ENCODE measurements at regions of chr3 and their contacts with region 1.

Region 1: DNA sequence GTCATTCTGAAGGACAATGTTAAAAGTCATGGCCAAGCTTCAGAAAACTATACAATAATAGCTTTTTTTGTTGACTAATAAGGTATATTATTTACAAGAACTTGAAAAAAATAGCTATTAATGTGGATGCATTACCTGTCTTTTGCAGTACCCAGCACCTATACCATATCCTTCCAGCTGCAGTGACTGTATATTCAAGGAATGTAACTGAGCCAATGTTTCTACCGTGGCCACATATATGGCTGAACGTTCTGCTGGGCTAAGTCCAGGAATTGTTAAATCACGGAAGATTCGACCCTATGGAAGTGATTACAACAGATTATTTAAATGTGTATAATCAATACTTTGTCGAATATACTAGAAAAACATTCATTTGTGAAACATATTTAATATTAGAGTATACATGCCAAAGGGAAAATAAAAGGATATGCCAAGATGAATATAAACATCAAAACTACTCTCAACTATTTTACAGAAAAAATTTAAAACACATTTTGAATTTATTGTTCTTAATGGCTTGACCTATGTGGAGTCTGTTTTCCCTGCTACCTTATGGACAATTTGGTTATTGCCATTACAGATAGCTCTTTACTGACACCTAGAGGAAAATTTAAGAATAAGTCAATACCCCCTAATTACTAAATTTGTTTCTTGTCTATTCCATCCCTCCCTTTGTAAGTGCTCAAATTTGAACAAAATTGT is 17.6 kb downstream of the ACAD11 start:
- DNase-seq: no peak
- ATAC-seq: peak in 3 of 4 donors; percentile 63 to 77 (median 67)
- H3K4me3 ChIP-seq: no peak overlapping the region
- H3K27ac ChIP-seq: no peak overlapping the region
- H3K4me1 ChIP-seq: no peaks in the 10 kb centered on the region
- H3K27me3 ChIP-seq: no peaks in the 10 kb centered on the region
- CTCF ChIP-seq: peak; percentile 79

Region 2: DNA sequence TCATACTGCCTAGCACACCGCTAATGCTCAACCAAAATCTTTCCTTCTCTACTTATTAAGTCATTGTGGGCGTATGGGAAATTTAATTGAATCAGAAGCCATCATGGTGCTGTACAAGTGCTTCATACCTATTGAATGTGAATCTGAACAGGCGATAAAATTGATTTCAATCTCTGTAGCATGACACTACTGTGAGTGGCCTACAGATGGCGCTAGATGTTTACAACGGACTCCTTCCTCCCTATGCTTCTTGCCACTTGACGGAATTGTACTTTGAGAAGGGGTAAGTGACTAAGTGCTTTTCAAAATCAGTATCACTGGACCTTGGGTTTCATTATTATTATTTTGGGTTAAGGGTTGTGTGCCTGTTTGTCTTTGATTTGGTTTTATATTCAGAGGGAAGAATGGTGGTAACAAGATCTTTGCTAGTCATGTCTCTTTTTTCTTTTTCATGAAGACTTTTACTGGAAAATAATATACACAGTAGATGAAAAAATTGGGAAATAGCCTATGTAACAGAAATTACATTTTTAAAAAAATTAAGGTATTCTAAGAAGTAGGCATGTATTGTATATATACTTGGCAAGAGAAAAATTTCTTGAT is 289.3 kb before region 1 on chr3:
- intact Hi-C with region 1: loop called (anchors 5 to 10 kb)
- DNase-seq: peak in 1 of 2 donors; percentile 21
- ATAC-seq: peak; percentile 81 to 94 (median 85)
- H3K4me3 ChIP-seq: no peak overlapping the region
- H3K27ac ChIP-seq: no peak overlapping the region
- H3K4me1 ChIP-seq: no peaks in the 10 kb centered on the region
- H3K27me3 ChIP-seq: no peaks in the 10 kb centered on the region
- CTCF ChIP-seq: peak; percentile 89

Region 3: DNA sequence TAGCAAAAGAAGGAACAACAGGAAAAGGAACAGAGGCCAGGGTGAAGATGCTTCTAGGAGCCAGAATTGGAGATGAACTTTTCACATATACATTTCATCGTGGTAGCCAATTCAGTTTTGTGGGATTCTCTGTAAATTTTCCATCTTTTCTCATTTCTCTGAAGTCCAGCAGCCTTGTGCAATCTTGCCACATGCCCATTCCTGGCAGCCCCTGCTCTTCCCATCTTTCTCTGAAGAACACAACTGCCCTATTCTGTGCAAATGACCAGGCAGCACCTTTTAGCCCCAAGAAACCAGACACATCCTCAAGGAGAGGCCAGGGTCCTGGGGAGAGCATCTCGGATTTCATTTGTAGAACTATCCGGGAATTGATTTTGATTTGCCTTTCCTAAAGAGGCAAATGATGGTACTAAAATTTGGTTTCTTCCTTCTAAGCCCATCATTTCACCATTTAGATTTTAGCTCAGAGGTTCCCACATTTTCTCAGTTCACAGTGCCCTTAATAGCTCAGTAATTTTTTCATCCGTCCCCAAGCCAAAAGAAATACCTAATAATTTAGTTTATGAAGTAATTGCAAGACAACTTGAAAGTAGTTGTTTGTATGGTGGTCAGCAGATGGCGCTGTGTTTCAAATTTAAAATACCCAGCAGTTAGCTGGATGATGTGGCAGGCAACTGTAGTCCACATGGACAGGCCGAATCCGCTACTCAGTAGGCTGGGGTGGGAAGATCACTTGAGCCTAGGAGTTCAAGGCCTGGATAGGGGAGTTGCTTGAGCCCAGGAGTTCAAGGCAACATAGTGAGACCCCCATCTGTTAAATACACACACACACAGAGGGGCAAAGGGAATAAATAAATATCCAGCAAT is 106.2 kb before region 1 on chr3:
- intact Hi-C with region 1: loop called (anchors 2 to 5 kb)
- DNase-seq: peak in 1 of 2 donors; percentile 38
- ATAC-seq: peak; percentile 65 to 91 (median 72)
- H3K4me3 ChIP-seq: no peak overlapping the region
- H3K27ac ChIP-seq: no peak overlapping the region
- H3K4me1 ChIP-seq: no peaks in the 10 kb centered on the region
- H3K27me3 ChIP-seq: no peaks in the 10 kb centered on the region
- CTCF ChIP-seq: peak; percentile 72

Region 4: DNA sequence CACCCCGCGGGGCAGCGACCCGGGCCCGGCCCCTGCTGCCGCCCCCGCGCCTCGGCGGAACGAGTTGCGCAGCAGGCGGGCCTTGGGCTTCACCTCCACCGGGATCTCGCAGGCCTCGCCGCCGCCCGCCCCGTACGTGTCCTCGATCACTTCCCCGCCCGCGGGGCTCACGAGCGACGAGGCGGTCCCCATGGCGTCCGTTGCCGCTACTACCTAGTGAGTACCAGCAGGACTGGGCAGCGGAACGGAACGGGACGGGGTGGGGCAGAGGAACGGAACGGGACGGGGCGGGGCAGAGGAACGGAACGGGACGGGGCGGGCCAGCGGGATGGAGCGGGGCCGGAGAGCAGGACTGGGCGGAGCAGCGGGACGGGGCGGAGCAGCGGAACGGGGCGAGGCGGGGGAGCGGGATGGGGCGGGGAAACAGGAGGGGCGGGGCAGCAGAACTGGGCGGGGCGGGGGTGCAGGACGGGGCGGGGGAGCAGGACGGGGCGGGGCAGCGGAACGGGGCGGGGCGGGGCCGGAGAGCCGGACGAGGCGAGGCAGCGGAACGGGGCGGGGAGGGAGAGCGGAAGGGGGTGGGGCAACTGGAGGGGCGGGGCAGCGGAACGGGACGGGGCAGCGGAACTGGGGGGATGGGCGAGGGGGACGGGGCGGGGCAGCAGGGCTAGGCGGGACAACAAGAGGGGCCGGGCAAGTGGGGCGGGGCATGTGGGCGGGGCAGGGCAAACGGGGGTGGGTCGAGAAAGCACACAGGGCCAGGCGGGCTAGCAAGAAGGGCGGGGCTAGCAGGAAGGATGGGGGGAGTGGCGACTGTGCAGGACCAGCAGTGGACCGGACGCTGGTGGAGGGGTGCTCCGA is 80.4 kb after region 1 on chr3 and contains the start of gene NPHP3:
- intact Hi-C with region 1: no loop called
- DNase-seq: peak; percentile 98 to 99
- ATAC-seq: peak; percentile 88 to 93 (median 92)
- H3K4me3 ChIP-seq: peak within 1 kb of the TSS; percentile 79
- H3K27ac ChIP-seq: peak within 1 kb of the TSS; percentile 91
- H3K4me1 ChIP-seq: peaks cover 30% of the 10 kb centered on the region
- H3K27me3 ChIP-seq: no peaks in the 10 kb centered on the region
- CTCF ChIP-seq: no peak
- total RNA-seq, gene NPHP3: 6.9 to 9.1 (median 8.1) TPM

Measured in psoas muscle (tissue), 8 donors.